ENCODE measurements at regions of chr11 and their contacts with region 1.

Region 1: DNA sequence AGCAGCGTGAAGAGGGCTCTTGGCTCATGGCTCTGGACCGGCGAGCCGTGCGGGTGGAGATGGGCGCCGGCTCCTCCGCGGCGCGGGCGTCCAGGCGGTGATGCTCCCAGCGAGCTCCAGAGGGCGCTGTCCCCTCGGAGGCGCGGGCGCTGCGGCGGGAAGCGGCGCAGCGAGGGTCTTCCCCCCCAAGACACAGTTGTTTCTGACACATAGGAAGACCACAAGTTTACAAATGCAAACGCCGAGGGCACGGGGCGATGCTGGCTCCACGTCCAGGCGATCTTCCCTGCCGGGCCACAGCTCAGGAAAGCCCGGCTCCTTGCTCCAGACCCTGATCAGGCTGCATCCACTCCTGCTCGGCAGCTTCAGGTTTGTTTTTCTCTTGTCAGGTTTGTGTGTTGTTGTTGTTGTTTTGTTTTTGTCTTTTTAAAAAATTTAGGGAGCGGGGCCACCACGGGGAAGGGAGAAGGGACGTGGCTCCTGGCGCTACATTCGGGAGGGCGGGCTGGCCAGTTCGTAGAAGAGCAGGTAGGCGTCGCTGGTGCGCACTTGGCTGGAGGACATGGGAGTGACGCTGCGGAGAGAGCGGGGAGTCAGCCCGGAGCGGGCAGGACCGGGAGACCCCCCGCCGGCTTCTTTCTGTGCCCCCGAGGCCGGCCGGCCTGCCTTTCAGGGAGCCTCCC is 10.0 kb upstream of the MFRP start:
- DNase-seq: peak; percentile 91
- CTCF ChIP-seq: peak; percentile 98

Region 2: DNA sequence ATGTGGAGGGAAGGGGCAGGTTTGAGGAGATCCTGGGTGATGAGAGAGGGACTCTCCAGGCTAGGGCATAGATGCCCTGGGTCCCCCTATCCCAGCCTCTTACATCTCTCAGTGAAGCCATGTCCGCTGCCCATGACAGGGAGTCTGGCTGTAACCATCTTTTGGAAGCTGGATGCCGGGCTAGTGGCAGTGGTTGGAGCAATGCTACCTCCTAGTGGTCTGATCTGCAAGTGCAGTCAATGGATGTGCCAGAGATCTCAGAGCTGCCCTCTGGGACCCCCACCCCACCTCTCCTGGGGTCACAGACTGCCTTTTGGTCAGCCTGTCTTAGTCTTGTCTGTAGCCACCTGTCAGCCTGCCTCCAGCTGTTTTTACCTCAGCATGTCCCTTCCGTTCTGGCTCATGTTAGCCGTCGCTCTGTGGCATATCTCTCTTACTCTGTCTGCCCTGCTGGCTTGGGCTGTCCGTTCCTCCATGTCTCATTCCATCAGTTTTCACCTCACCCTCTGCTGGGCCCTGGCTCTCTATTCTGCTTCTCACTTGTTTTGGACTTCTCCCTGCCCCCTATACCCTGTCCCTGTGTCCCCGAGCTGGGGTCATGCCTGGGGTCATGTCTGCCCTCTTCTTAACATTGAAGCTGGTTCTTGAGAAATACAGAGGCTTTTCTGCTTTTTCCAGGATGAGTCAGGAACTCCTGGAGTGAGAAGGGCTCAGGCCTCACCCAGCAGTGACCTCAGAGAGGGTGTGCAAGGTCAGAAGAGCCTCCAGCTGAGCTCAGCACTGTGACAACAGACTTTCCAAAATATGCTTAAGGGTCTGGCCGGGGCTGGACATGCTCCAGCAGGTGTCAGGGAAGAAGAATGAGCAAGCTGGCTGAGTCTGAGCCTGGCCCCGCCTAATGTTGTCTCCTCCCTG is 118.4 kb after region 1 on chr11:
- in situ Hi-C with region 1: loop called (anchors 10 kb)
- DNase-seq: peak; percentile 75
- CTCF ChIP-seq: peak; percentile 77